Kidney (tissue), 22 donors: ENCODE measurements at regions of chr5 and their contacts with region 1.

Region 1: DNA sequence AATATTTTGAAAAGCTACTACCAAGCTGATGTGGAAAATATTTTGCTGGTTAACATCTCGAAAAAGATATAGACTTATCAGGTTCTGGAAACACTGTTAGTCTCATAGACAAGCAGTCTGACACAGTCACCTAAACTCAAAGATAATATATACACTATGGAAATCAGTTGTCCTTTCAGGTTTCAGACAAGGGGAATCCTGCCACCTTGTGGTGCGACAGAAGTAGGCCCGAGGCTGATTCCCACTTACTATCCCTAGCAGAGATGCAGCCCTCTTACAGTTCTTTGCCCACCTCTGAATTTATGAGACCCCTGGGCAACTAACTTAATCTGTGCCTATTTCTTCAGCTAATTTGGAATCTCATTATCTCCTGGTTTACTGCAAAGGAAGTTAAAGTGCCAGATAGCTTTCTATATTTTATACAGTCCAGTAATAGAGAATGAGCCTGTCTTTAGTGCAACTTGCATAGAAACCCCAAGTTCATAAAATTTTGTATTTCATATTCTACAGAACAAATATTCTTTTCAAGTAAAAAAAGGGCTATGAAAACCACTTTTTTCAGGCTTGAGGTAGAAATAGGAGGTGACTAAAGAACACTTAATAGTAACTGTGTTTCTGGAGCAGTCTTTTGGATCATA is 16.9 kb downstream of the RAD1 start:
- DNase-seq: peak in 4 of 5 donors; percentile 75 to 90 (median 82)
- H3K4me3 ChIP-seq: peak overlapping the region in 1 of 3 donors; percentile 3
- H3K27ac ChIP-seq: no peak overlapping the region
- H3K4me1 ChIP-seq: no peaks in the 10 kb centered on the region
- H3K27me3 ChIP-seq: no peaks in the 10 kb centered on the region
- CTCF ChIP-seq: peak; percentile 83

Region 2: DNA sequence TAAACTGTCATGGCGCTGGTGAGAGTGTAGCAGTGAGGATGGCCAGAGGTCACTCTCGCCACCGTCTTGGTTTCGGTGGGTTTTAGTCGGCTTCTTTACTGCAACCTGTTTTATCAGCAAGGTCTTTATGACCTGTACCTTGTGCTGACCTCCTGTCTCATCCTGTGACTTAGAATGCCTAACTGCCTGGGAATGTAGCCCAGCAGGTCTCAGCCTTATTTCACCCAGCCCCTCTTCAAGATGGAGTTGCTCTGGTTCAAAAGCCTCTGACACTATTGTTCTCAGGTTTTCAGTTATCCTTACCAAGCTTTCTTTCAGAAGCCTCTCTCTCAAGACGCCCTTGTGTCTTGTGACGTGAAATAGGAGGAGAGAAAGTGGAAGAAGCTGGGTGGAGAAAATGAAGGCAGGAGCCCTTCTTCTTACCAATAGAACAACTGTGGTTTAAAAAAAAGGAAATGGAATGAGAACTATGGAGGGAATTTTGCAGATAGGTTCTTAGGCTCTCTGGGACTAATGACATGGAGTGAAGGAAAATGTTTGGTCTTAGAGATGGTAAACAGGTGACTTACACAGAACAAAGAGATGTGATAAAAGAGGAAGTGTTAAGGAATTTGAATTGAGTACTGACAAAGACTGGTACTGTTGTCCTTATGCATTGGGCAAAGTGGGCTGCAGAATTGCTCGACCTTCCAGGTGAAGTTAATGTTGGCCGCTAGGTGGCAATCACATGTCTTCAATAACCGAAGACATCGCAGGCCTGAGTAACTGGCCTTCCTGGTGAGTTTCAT is 375.6 kb before region 1 on chr5:
- intact Hi-C with region 1: loop called (anchors 5 kb)
- DNase-seq: peak in 4 of 5 donors; percentile 64 to 91 (median 79)
- H3K4me3 ChIP-seq: no peak overlapping the region
- H3K27ac ChIP-seq: no peak overlapping the region
- H3K4me1 ChIP-seq: no peaks in the 10 kb centered on the region
- H3K27me3 ChIP-seq: no peaks in the 10 kb centered on the region
- CTCF ChIP-seq: peak; percentile 81